Dorsolateral prefrontal cortex (tissue), 120 donors: ENCODE measurements at regions of chr7 and their contacts with region 1.

Region 1: DNA sequence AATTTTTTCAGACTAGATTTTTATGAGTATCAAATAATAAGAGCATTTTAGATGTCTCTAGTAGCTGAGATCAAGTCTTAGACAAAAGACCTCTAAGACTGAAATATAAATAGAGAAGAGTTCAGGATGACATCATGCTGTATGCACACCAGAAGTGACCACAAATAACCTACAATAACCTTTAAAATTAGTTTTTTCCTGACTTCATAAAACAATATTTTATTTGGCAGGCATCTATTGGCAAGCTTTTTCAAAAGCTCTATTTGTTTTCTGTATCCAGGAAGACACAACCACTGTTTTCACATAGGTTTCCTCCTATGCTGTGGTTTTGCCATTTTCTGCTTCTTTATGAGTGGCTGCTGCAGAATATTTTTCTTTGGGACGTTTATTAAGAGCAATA is 359.1 kb downstream of the CRPPA start:
- DNase-seq: no peak
- H3K4me3 ChIP-seq: no peak overlapping the region
- H3K27ac ChIP-seq: no peak overlapping the region
- H3K27me3 ChIP-seq: no peaks in the 10 kb centered on the region
- CTCF ChIP-seq: no peak

Region 2: GRCh38 chr7:15015545-15016326 is 1046.5 kb before region 1 on chr7:
- intact Hi-C with region 1: loop called in 1 of 2 experiments (anchors 10 kb)
- DNase-seq: peak in 3 of 10 donors; percentile 6 to 50 (median 15)
- H3K4me3 ChIP-seq: peak overlapping the region in 54 of 59 donors; percentile 3 to 52 (median 29)
- H3K27ac ChIP-seq: peak overlapping the region in 45 of 59 donors; percentile 3 to 81 (median 55)
- H3K27me3 ChIP-seq: no peaks in the 10 kb centered on the region
- CTCF ChIP-seq: peak; percentile 51 to 88 (median 74)